HEK293 (cell line): ENCODE measurements at regions of chr11 and their contacts with region 1.

Region 1: GRCh38 chr11:113628912-113629311 is 77.2 kb downstream of the TMPRSS5 start:
- H3K4me3 ChIP-seq: no peak overlapping the region
- H3K27ac ChIP-seq: no peak overlapping the region
- H3K4me1 ChIP-seq: no peaks in the 10 kb centered on the region
- CTCF ChIP-seq: no peak

Region 2: DNA sequence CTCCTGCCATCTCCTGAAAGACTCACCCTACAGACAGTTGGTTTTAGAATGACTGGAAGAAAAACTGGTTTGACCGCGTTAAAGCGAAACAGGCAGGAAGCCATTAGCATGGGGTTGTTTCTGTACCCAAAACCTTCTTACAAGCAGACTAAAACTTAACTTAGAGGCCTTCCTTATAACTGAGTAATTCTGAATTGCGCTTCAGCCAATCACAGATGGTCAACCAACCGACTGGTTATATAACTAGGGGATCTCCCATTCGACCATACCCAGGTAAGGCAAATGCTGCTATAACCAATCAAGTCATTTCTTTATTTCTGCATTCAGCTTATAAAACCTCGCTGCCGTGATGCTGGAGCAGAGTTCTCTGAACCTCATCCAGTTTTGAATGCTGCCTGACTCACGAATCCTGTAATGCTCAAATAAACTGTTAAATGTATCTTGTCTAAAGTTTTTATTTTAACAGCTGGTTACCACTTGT is 65.9 kb before region 1 on chr11:
- CTCF ChIA-PET with region 1: no interaction called
- POLR2A ChIA-PET with region 1: no interaction called
- H3K4me3 ChIP-seq: no peak overlapping the region
- H3K27ac ChIP-seq: no peak overlapping the region
- H3K4me1 ChIP-seq: no peaks in the 10 kb centered on the region
- CTCF ChIP-seq: no peak

Region 3: DNA sequence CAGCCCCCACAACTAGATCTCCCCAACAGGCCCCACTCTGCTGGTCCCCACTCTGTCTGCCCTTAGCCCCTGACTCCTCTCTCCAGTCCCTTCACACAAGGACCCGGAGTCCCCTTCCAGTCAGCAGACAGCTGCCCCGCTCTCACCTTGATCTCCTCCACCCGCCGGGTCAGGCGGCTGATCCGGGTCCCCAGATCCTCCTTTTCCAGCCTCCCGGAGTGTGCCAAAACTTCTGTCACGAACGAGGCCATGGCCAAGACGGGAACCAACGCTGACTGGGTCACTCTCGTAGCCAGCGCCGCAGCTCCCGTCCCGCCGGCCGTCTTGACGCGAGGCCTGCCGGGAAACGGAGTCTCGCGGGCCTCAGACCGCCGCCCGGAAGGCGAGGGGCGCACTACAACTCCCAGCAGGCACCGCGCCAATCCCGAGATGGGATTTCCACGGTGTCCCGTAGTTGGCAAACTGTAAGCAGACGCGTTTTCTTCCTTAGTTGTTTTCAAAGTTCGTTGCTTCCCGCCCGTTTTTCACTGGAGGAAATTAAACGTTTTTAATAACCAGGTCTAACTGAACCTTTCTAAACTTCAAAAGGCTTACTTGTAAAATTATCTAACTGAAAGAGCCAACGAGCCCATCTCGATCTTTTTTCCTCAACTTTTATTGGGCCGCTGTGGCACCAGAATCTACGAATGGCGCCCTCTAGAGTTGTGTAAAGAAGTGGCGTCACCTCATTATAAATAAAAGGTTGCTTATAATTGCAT is 144.7 kb after region 1 on chr11 and contains the start of gene ZW10:
- CTCF ChIA-PET with region 1: no interaction called
- POLR2A ChIA-PET with region 1: interaction called, 10 read pairs
- H3K4me3 ChIP-seq: peak within 1 kb of the TSS; percentile 96
- H3K27ac ChIP-seq: peak within 1 kb of the TSS; percentile 47; the same call in 1 of the 2 replicates
- H3K4me1 ChIP-seq: 0 out of 2 replicates have a peak, but pooled peaks cover 3% of the 10 kb centered on the region
- CTCF ChIP-seq: peak; percentile 47